Heart right ventricle (tissue), 16 donors: ENCODE measurements at regions of chr12 and their contacts with region 1.

Region 1: DNA sequence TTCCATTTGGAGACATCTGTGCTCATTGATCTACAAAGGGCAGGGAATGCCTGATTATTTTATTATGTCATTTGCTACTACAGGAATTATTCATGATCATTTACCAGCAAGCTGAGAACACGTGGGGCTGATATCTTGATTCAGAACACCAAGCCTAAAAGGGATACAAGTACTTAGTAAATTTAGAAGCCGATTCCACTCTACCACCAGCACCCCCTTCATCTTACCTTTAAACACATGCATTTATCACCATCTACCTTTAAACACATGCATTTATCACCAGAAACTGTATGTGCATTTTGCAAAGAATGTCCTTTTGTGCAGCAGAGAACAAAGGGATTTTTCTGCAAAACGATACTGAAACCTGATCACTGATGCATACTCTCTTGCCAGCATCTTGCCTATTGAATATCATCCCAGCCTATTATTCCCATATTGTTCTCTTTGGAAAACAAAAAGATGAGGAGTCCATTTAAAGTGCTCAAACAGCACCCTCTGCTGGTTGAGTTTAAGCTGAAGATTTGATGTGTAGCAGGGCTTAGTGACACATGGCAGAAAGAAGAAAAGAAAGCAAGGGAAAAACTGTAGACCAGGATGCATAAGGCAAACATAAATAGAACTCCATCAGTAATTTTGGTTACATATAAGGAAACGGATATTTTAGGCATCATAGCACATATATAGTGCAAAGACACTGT is 132.6 kb upstream of the PLEKHG7 start:
- DNase-seq: peak in 1 of 2 donors; percentile 82
- ATAC-seq: peak; percentile 67 to 92 (median 86)
- H3K4me3 ChIP-seq: no peak overlapping the region
- H3K27ac ChIP-seq: peak overlapping the region in 2 of 10 donors; percentile 23 to 58
- H3K4me1 ChIP-seq: peaks cover 0 to 38% (median 8%) of the 10 kb centered on the region in 9 donors
- H3K27me3 ChIP-seq: no peaks in the 10 kb centered on the region
- CTCF ChIP-seq: peak; percentile 70 to 89 (median 82)

Region 2: GRCh38 chr12:91388552-91388965 is 1181.6 kb before region 1 on chr12:
- intact Hi-C with region 1: loop called (anchors 2 to 10 kb)
- DNase-seq: peak in 1 of 2 donors; percentile 8
- ATAC-seq: peak in 6 of 8 donors; percentile 34 to 69 (median 54)
- H3K4me3 ChIP-seq: no peak overlapping the region
- H3K27ac ChIP-seq: peak overlapping the region in 5 of 10 donors; percentile 4 to 50 (median 20)
- H3K4me1 ChIP-seq: peaks cover 0 to 6% (median 0%) of the 10 kb centered on the region in 9 donors
- H3K27me3 ChIP-seq: no peaks in the 10 kb centered on the region
- CTCF ChIP-seq: no peak

Region 3: DNA sequence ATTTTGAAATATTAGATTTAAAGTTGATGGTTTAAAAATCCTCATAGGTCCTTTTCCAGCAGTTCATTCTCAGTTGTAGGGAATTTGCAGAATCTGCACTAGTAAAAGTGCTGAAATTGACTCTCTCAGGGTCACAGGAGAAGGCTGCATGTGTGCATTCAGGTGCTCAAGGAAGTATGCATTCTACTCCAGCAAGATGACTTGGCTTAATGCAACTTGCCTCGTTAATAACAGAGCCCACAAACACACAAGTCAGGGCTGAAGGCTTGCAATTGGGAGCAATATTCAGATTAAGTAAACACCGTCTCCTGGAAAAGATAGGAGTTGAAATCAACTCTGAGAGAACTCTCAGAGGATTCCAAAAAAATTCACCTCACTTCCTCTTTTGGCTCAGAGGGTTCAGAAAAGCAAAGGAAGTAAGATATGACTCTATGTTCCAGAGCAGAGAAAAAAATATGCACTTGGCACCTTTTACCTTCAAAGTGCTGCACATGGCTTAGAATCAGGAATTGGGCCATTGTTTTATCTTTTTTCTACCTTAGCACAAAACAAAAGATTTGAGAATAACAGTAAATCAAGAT is 981.2 kb before region 1 on chr12:
- intact Hi-C with region 1: loop called in 1 of 10 experiments (anchors 10 kb)
- DNase-seq: no peak
- ATAC-seq: peak in 3 of 8 donors; percentile 29 to 86 (median 67)
- H3K4me3 ChIP-seq: no peak overlapping the region
- H3K27ac ChIP-seq: peak overlapping the region in 3 of 10 donors; percentile 2 to 43 (median 31)
- H3K4me1 ChIP-seq: peaks cover 0 to 12% (median 5%) of the 10 kb centered on the region in 9 donors
- H3K27me3 ChIP-seq: no peaks in the 10 kb centered on the region
- CTCF ChIP-seq: no peak

Region 4: DNA sequence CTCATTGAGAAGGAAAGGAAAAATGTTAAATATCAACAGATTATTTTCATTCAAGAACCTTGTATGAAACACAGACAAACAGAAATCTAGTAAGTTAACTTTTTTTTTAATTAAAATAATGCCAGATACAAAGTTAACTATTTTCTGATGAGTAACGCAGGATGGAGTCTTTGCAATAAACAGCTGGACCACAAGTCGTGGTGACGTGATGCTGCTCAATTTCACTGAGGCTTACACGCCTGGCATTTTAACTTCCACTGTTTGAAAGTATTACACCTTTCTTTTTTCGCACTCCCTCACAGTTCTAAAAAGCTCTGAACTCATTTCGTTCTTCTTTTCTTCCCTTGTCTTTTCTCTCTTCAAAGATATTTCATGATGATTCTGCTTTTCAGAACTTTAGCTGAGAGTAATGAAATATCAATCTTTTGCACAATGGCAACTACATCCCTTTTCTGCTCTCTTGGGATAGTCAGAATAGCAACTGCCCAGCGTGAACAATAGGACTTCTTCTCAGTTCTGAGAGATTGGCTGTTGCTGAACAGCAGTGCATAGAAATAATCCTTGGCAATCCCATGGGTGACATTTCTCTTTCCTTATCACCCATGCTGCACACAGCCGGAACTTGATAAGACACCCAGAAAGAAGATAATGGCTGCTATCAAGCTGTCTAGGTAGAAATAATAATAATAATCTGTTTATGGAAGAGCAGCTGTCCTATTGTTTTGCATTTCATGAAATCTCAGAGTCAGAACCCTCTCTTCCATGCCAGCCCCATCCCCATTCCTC is 585.0 kb before region 1 on chr12:
- intact Hi-C with region 1: loop called in 2 of 10 experiments (anchors 10 kb)
- DNase-seq: no peak
- ATAC-seq: peak in 1 of 8 donors; percentile 47
- H3K4me3 ChIP-seq: no peak overlapping the region
- H3K27ac ChIP-seq: peak overlapping the region in 3 of 10 donors; percentile 9 to 64 (median 12)
- H3K4me1 ChIP-seq: peaks cover 0 to 66% (median 41%) of the 10 kb centered on the region in 9 donors
- H3K27me3 ChIP-seq: no peaks in the 10 kb centered on the region
- CTCF ChIP-seq: no peak

Region 5: GRCh38 chr12:92244036-92244435 is 326.2 kb before region 1 on chr12:
- intact Hi-C with region 1: loop called in 3 of 10 experiments (anchors 5 to 10 kb)
- DNase-seq: peak in 1 of 2 donors; percentile 60
- ATAC-seq: peak; percentile 86 to 98 (median 92)
- H3K4me3 ChIP-seq: peak overlapping the region in 1 of 10 donors; percentile 20
- H3K27ac ChIP-seq: peak overlapping the region; percentile 10 to 84 (median 56)
- H3K4me1 ChIP-seq: peaks cover 0 to 32% (median 16%) of the 10 kb centered on the region in 9 donors
- H3K27me3 ChIP-seq: no peaks in the 10 kb centered on the region
- CTCF ChIP-seq: peak in 6 of 9 donors; percentile 13 to 59 (median 33)

Region 6: DNA sequence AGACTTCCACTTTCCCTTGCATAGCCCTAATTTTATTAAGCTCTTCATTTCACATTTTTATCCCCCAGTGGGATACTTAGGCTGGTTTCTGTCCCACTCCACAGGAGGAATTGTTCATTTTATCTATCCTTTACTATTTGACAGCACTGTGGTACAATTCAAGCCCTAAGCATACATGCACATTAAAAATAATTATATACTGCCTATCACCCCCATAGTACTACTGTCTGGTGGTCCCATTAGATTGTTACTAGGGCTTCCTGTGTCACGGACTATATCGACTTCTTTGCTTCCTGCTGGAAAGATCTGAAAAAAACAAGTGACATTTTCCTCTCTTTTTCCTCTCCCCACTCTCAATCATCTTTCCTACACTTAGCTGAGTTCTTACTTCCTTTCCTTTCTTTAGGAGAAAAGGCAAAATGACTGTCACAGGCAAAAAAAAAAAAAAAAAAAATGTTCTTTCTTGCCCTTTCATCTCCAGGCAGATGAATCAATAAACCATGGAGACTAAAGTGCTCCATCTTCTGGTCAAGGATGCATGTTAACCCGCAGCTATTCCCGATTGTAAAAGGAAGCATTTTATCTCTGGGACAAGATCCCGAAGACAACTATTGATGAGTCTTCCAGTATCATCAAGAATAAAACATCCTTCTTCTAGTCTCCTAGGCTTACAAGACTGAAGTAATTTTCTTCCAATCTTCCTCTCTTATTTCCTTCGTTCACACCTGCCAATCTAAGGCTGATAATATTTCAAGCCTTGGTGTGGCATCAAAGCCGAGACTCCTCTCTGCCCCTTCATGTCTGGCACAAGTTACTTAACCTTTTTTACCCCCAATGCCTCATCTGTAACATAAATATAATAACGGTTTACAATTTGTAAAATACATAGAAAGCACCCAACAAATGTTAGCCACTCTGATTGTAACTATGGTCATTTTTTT is 38.2 kb after region 1 on chr12:
- intact Hi-C with region 1: no loop called
- DNase-seq: peak in 1 of 2 donors; percentile 13
- ATAC-seq: peak in 4 of 8 donors; percentile 12 to 56 (median 44)
- H3K4me3 ChIP-seq: no peak overlapping the region
- H3K27ac ChIP-seq: no peak overlapping the region
- H3K4me1 ChIP-seq: peaks cover 0 to 31% (median 0%) of the 10 kb centered on the region in 9 donors
- H3K27me3 ChIP-seq: no peaks in the 10 kb centered on the region
- CTCF ChIP-seq: peak; percentile 8 to 70 (median 52)